Naive thymus-derived CD4-positive, alpha-beta T cell (primary cell): ENCODE measurements at regions of chr6 and their contacts with region 1.

Region 1: DNA sequence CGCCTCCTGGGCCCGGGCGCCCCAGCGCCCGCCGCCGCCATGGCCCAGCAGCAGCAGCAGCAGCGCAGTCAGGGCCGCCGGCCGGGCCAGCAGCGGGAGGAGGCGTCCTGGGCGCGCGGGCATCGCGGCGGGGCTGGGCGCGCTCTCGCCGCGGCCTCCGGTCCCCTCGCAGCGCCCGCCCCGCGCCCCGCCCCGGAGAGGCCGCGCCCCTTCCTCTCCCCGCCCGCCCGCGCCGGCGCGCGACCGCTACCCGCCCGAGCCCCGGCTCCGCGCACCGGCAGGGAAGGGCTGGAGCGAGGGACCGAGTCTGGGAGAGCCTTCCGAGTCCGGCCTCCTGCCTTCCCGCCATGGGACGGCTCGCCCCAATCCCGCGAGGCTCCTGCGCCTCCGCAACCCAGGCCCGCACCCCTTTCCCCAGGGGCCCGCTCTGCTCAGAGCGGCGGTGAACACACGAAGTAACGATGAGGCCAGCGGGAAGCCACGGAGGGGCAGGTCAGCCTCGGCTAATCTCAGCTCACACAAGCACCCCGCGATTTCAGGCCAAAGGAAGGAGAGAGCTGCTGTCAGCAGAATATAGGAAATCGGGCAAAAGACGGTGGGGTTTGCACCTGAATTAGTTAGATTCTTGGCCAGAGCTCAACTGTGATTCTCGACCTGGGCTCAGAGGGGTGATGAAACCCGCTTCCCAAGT is at the start of gene TXNDC5:
- DNase-seq: peak; percentile 35 to 82 (median 55)
- ATAC-seq: peak; percentile 91
- H3K4me3 ChIP-seq: peak within 1 kb of the TSS; percentile 76
- H3K4me3 Mint-ChIP-seq: peak within 1 kb of the TSS in 9 of 10 donors; percentile 68 to 89 (median 78)
- H3K27ac ChIP-seq: peak within 1 kb of the TSS; percentile 46
- H3K27ac Mint-ChIP-seq: peak within 1 kb of the TSS in 5 of 9 donors; percentile 3 to 76 (median 27)
- H3K4me1 ChIP-seq: peaks cover 6 to 16% of the 10 kb centered on the region in 2 donors
- H3K4me1 Mint-ChIP-seq: peaks cover 4 to 18% (median 6%) of the 10 kb centered on the region in 7 donors
- H3K27me3 ChIP-seq: no peaks in the 10 kb centered on the region
- H3K27me3 Mint-ChIP-seq: no peaks in the 10 kb centered on the region
- total RNA-seq, gene TXNDC5: 11.5 to 48.6 (median 34.8) TPM

Region 2: DNA sequence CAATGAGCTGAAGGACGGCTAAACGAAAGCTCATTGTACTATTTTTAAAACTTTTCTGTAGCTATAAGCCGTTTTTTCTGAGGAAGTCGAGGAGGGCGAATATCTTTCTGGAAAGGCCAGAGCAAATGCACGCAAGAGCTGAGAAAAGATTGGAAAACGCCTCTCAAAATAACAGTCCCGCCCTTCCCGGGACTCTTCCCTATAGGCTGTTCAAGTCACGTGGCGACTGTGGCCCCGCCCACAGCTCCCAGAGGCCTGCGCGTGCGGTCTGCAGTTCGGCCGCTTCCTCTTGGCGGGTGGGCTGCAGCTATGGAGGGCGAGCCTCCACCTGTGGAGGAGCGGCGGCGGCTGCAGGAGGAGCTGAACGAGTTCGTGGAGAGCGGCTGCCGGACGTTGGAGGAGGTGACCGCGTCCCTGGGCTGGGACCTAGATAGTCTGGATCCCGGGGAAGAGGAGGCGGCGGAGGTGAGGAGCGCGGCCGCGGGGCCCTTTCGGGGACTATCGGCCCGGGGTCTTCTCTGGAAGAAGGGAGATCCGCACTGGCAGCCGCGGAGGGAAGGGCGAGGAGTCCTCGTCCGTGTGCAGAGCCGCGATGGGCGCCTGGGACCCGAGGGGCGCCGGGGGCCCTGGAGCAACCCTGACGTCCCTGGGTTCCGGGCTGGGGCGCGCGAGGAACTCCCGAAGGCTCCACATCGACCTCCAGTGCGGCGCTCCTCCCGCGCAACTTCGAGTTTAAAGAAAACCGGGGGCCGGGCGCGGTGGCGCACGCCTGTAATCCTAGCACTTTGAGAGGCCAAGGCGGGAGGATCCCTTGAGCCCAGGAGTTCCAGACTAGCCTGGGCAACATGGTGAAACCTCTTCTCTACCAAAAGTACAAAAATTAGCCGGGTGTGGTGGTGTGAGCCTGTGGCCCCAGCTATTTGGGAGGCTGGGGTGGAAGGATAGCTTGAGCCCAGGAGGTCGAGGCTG is 320.6 kb before region 1 on chr6 and contains the start of gene SNRNP48:
- CTCF ChIA-PET with region 1: no interaction called
- POLR2A ChIA-PET with region 1: no interaction called
- intact Hi-C with region 1: loop called in 1 of 2 experiments (anchors 10 kb)
- DNase-seq: peak; percentile 83 to 93 (median 88)
- ATAC-seq: peak; percentile 99
- H3K4me3 ChIP-seq: peak within 1 kb of the TSS; percentile 89
- H3K4me3 Mint-ChIP-seq: peak within 1 kb of the TSS; percentile 93 to 100 (median 99)
- H3K27ac ChIP-seq: peak within 1 kb of the TSS; percentile 77
- H3K27ac Mint-ChIP-seq: peak within 1 kb of the TSS; percentile 90 to 97 (median 94)
- H3K4me1 ChIP-seq: peaks cover 12 to 17% of the 10 kb centered on the region in 2 donors
- H3K4me1 Mint-ChIP-seq: peaks cover 28 to 62% (median 54%) of the 10 kb centered on the region in 7 donors
- H3K27me3 ChIP-seq: no peaks in the 10 kb centered on the region
- H3K27me3 Mint-ChIP-seq: peaks cover 0 to 2% (median 0%) of the 10 kb centered on the region in 5 donors
- total RNA-seq, gene SNRNP48: 8.6 to 30.4 (median 15.3) TPM

Region 3: DNA sequence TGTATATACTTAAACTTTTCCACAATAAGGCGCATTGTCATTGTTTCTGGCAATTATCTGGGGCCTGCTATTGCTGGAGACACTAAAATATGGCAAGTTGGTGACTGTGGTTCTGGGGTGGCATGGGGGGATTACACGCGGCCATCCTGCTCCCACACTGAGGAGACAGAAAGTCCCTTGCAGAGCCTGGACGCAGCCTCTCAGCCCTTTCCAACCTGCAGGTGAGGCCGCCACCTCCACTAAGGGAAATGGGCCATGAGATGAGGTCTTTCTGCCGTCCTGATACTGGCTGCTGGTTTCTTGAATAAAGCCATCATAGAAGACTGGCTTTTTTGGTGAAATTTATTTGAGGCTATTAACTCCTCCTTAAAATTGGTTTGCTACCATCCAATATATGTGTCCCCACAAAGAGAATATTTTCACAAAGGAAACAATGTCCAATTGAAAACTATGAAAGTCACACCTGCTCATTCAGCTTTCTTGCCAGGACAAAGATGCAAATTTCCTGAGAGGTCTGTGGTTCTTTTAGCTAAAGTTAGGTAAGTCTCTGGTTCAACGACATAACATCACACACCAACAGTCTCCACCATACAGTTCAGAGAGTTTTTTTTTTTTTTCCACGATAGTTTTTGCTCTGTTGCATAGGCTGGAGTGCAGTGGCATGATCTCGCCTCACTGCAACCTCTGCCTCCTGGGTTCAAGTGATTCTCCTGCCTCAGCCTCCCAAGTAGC is 13.2 kb before region 1 on chr6:
- CTCF ChIA-PET with region 1: no interaction called
- POLR2A ChIA-PET with region 1: no interaction called
- intact Hi-C with region 1: no loop called
- DNase-seq: no peak
- ATAC-seq: no peak
- H3K4me3 ChIP-seq: no peak overlapping the region
- H3K4me3 Mint-ChIP-seq: no peak overlapping the region
- H3K27ac ChIP-seq: no peak overlapping the region
- H3K27ac Mint-ChIP-seq: no peak overlapping the region
- H3K4me1 ChIP-seq: no peaks in the 10 kb centered on the region
- H3K4me1 Mint-ChIP-seq: no peaks in the 10 kb centered on the region
- H3K27me3 ChIP-seq: no peaks in the 10 kb centered on the region
- H3K27me3 Mint-ChIP-seq: no peaks in the 10 kb centered on the region

Region 4: GRCh38 chr6:8006208-8006607 is 95.4 kb after region 1 on chr6:
- CTCF ChIA-PET with region 1: no interaction called
- POLR2A ChIA-PET with region 1: no interaction called
- intact Hi-C with region 1: loop called in 1 of 2 experiments (anchors 10 kb)
- DNase-seq: peak in 1 of 9 donors; percentile 2
- ATAC-seq: no peak
- H3K4me3 ChIP-seq: no peak overlapping the region
- H3K4me3 Mint-ChIP-seq: no peak overlapping the region
- H3K27ac ChIP-seq: no peak overlapping the region
- H3K27ac Mint-ChIP-seq: no peak overlapping the region
- H3K4me1 ChIP-seq: no peaks in the 10 kb centered on the region
- H3K4me1 Mint-ChIP-seq: peaks cover 0 to 12% (median 4%) of the 10 kb centered on the region in 7 donors
- H3K27me3 ChIP-seq: no peaks in the 10 kb centered on the region
- H3K27me3 Mint-ChIP-seq: peaks cover 0 to 4% (median 0%) of the 10 kb centered on the region in 5 donors

Region 5: DNA sequence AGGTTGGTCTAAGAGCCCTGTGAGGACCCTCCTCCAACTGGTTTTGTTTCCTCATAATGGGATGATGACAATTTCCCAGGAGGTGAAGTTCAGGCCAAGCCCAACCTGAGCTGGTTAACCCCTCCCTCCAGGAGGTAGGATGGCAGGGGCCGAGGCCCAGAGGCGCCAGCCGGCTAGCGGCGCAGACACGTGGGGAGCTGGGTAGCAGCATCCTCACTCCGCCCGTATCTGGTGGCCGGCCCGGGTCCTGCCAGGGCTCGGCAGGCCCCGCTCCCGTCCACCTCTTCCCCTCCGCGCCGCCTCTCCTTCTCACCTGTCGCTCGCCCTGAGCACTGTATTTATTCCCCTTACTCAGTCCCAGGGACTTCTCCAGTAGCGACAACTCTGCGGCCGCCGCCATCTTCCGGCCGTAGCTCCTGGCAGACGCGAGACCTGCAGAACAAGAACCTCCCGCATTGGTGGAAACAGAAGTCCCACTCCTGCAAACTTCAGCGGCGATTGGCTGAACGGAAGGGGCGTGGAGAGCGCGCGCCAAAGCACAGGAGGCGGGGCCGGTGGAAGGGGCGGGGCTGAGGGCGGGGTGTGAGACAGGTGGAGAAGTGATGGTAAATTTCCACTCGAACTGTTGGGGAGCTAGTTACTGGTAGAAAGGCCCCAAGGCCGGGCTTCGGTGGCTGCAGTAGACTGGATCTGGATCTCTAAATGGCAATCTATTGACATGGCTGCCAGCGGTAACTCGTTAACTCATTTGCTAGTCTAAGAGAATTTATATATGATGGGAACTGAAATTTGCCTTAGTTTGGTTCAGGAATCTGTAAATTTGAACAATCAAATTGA is 191.5 kb after region 1 on chr6 and contains the start of gene EEF1E1:
- CTCF ChIA-PET with region 1: no interaction called
- POLR2A ChIA-PET with region 1: no interaction called
- intact Hi-C with region 1: loop called (anchors 1 kb)
- DNase-seq: peak; percentile 77 to 97 (median 92)
- ATAC-seq: peak; percentile 100
- H3K4me3 ChIP-seq: peak within 1 kb of the TSS; percentile 75
- H3K4me3 Mint-ChIP-seq: peak within 1 kb of the TSS; percentile 85 to 100 (median 98)
- H3K27ac ChIP-seq: peak within 1 kb of the TSS; percentile 78
- H3K27ac Mint-ChIP-seq: peak within 1 kb of the TSS; percentile 91 to 99 (median 95)
- H3K4me1 ChIP-seq: peaks cover 6 to 8% of the 10 kb centered on the region in 2 donors
- H3K4me1 Mint-ChIP-seq: peaks cover 21 to 43% (median 34%) of the 10 kb centered on the region in 7 donors
- H3K27me3 ChIP-seq: no peaks in the 10 kb centered on the region
- H3K27me3 Mint-ChIP-seq: peaks cover 13 to 27% (median 18%) of the 10 kb centered on the region in 5 donors
- total RNA-seq, gene EEF1E1: 10.2 to 41.0 (median 21.0) TPM